Right cardiac atrium (tissue), 5 donors: ENCODE measurements at regions of chr5 and their contacts with region 1.

Region 1: DNA sequence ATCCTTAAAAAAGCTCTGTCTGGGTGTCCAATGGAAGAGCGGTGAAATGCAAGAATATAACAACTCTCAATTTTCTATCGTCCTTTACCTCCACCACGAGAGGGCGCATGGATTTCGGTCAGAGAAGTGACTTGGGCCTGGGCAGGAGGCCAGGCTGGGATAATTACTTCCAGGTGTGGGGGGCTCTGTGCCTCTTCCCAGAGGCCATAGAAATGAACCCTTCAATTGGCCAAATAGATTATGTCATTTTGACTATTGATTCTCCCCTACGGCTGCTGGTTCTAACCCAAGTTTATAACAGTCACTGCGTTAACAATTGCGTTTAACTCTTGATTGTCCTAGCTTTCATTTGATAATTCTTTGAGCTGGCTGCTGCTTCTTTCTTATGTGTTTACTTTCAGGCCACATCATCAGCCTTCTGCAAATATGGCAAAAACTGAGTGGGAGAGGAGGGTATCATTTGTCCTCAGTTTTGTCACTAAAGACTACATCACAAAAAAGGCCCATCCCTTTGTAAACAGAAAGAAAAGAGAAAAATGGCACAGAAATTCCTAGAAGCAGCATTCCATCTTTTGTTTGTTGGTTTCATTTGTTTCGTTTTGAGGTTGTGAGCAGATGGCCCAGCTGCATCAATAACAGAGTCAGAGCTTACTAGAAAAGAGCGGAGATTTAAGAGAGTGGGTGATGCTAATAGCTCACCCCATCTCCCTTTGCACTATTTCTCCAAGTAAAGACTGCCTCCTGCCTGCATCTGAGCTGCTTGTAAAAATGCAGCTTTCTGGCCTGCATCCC is 45.4 kb upstream of the ZFR start:
- DNase-seq: peak; percentile 80 to 90 (median 89)
- ATAC-seq: peak; percentile 57 to 78
- H3K4me3 ChIP-seq: no peak overlapping the region
- H3K27ac ChIP-seq: no peak overlapping the region
- H3K4me1 ChIP-seq: no peaks in the 10 kb centered on the region
- H3K27me3 ChIP-seq: no peaks in the 10 kb centered on the region

Region 2: GRCh38 chr5:32202394-32202793 is 287.6 kb before region 1 on chr5:
- intact Hi-C with region 1: no loop called
- DNase-seq: no peak
- ATAC-seq: peak; percentile 49 to 70
- H3K4me3 ChIP-seq: no peak overlapping the region
- H3K27ac ChIP-seq: no peak overlapping the region
- H3K4me1 ChIP-seq: peaks cover 6% of the 10 kb centered on the region
- H3K27me3 ChIP-seq: no peaks in the 10 kb centered on the region

Region 3: GRCh38 chr5:32355686-32356085 is 134.3 kb before region 1 on chr5:
- intact Hi-C with region 1: no loop called
- DNase-seq: no peak
- ATAC-seq: no peak
- H3K4me3 ChIP-seq: no peak overlapping the region
- H3K27ac ChIP-seq: no peak overlapping the region
- H3K4me1 ChIP-seq: no peaks in the 10 kb centered on the region
- H3K27me3 ChIP-seq: no peaks in the 10 kb centered on the region

Region 4: GRCh38 chr5:32585446-32586275 is 95.7 kb after region 1 on chr5 and contains the start of gene SUB1:
- intact Hi-C with region 1: loop called (anchors 5 to 10 kb)
- DNase-seq: peak; percentile 96 to 98 (median 98)
- ATAC-seq: peak; percentile 97 to 98
- H3K4me3 ChIP-seq: peak within 1 kb of the TSS; percentile 96
- H3K27ac ChIP-seq: peak within 1 kb of the TSS; percentile 97
- H3K4me1 ChIP-seq: peaks cover 2% of the 10 kb centered on the region
- H3K27me3 ChIP-seq: no peaks in the 10 kb centered on the region
- total RNA-seq, gene SUB1: 209 to 237 (median 223) TPM

Region 5: DNA sequence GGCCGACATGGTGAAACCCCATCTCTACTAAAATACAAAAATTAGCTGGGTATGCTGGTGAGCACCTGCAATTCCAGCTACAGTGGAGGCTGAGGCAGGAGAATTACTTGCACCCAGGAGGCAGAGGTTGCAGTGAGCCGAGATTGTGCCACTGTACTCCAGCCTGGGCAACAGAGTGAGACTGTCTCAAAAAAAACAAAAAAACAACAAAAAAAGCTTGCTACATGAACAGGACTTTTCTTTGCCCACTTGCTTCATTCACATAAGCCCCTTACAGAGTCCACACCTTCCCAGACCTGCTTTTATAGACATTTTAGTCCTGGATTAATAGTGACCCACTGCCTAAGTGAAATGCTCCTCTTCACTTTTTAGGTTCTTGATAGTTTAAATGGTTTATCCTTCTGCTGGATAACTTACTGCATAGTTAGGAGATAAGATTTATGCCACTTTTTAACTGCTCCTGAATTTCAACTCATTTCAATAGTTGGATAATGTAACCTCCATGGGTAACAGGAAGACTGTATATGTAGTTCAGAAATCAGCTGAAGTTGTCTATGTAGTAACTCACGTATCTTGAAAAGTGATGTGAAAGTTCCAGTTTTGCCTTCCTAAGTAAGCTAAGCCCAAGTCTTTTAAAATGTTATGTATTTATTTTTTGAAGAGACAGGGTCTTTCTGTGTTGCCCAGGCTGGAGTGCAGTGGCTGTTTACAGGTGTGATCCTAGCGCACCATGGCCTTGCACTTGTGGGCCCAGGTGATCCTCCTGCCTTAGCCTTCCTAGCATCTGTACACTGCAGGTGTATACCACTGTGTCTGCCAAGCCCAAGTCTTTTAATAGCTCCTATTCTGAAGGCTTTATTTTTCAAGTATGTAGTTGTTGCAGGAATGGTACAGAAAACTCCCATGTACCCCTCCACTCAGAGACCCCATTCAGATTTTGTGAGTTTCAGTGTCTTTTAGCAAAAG is 115.1 kb after region 1 on chr5:
- intact Hi-C with region 1: loop called in 2 of 4 experiments (anchors 5 kb)
- DNase-seq: no peak
- ATAC-seq: peak in 1 of 2 donors; percentile 29
- H3K4me3 ChIP-seq: no peak overlapping the region
- H3K27ac ChIP-seq: no peak overlapping the region
- H3K4me1 ChIP-seq: no peaks in the 10 kb centered on the region
- H3K27me3 ChIP-seq: no peaks in the 10 kb centered on the region

Region 6: GRCh38 chr5:32613050-32613672 is 123.2 kb after region 1 on chr5:
- intact Hi-C with region 1: loop called in 2 of 4 experiments (anchors 5 kb)
- DNase-seq: peak; percentile 78 to 92 (median 88)
- ATAC-seq: peak; percentile 63 to 73
- H3K4me3 ChIP-seq: no peak overlapping the region
- H3K27ac ChIP-seq: no peak overlapping the region
- H3K4me1 ChIP-seq: peaks cover 3% of the 10 kb centered on the region
- H3K27me3 ChIP-seq: no peaks in the 10 kb centered on the region

Region 7: GRCh38 chr5:33423018-33423630 is 933.1 kb after region 1 on chr5:
- intact Hi-C with region 1: loop called in 1 of 4 experiments (anchors 10 kb)
- DNase-seq: no peak
- ATAC-seq: peak in 1 of 2 donors; percentile 44
- H3K4me3 ChIP-seq: no peak overlapping the region
- H3K27ac ChIP-seq: no peak overlapping the region
- H3K4me1 ChIP-seq: no peaks in the 10 kb centered on the region
- H3K27me3 ChIP-seq: no peaks in the 10 kb centered on the region